IMR-90 (cell line): ENCODE measurements at regions of chr21 and their contacts with region 1.

Region 1: GRCh38 chr21:37164742-37165141 is 91.7 kb downstream of the TTC3 start:
- DNase-seq: no peak
- ATAC-seq: no peak
- H3K4me3 ChIP-seq: no peak overlapping the region
- H3K27ac ChIP-seq: peak overlapping the region; percentile 18; the same call in 1 of the 2 replicates
- H3K4me1 ChIP-seq: no peaks in the 10 kb centered on the region; the same call in 1 of the 2 replicates
- H3K27me3 ChIP-seq: no peaks in the 10 kb centered on the region
- CTCF ChIP-seq: no peak
- POLR2A ChIP-seq: no peak
- RAD21 ChIP-seq: no peak

Region 2: DNA sequence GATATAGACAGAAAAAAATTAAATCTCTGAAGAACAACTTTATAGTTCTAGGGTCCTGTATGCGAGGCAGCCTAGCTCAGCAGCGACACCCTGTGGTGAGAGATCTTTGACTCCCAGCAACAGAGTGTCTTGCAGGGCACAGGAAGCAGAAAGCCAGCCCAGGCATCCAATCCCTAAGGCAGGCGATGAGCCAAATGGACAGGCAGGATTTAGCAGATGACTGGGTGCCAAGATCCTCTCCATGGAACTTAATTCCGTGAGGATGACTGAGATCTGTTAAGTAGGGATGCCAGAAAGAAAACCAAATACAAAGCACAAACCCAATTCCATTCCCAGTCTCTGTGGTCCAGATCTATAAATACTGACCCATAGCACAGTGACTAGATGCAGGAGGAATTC is 237.0 kb before region 1 on chr21:
- CTCF ChIA-PET with region 1: no interaction called
- POLR2A ChIA-PET with region 1: no interaction called
- dilution Hi-C with region 1: no loop called
- in situ Hi-C with region 1: no loop called
- intact Hi-C with region 1: no loop called
- DNase-seq: peak; percentile 97
- ATAC-seq: peak; percentile 96
- H3K4me3 ChIP-seq: no peak overlapping the region
- H3K27ac ChIP-seq: no peak overlapping the region; the same call in 1 of the 2 replicates
- H3K4me1 ChIP-seq: peaks cover 10% of the 10 kb centered on the region
- H3K27me3 ChIP-seq: no peaks in the 10 kb centered on the region
- CTCF ChIP-seq: peak; percentile 97
- POLR2A ChIP-seq: no peak
- RAD21 ChIP-seq: peak; percentile 95

Region 3: GRCh38 chr21:37088186-37088735 is 76.5 kb before region 1 on chr21:
- CTCF ChIA-PET with region 1: no interaction called
- POLR2A ChIA-PET with region 1: no interaction called
- dilution Hi-C with region 1: no loop called
- in situ Hi-C with region 1: no loop called
- intact Hi-C with region 1: no loop called
- DNase-seq: peak; percentile 35
- ATAC-seq: peak; percentile 67
- H3K4me3 ChIP-seq: no peak overlapping the region
- H3K27ac ChIP-seq: no peak overlapping the region
- H3K4me1 ChIP-seq: peaks cover 2% of the 10 kb centered on the region; the same call in 1 of the 2 replicates
- H3K27me3 ChIP-seq: no peaks in the 10 kb centered on the region
- CTCF ChIP-seq: no peak
- POLR2A ChIP-seq: no peak
- RAD21 ChIP-seq: no peak

Region 4: GRCh38 chr21:37139902-37140301 is 24.8 kb before region 1 on chr21:
- CTCF ChIA-PET with region 1: no interaction called
- POLR2A ChIA-PET with region 1: no interaction called
- dilution Hi-C with region 1: no loop called
- in situ Hi-C with region 1: no loop called
- intact Hi-C with region 1: loop called (anchors 1 kb)
- DNase-seq: peak; percentile 71
- ATAC-seq: peak; percentile 87
- H3K4me3 ChIP-seq: no peak overlapping the region
- H3K27ac ChIP-seq: peak overlapping the region; percentile 59; the same call in 1 of the 2 replicates
- H3K4me1 ChIP-seq: peaks cover 2% of the 10 kb centered on the region; the same call in 1 of the 2 replicates
- H3K27me3 ChIP-seq: no peaks in the 10 kb centered on the region
- CTCF ChIP-seq: no peak
- POLR2A ChIP-seq: no peak
- RAD21 ChIP-seq: no peak

Region 5: DNA sequence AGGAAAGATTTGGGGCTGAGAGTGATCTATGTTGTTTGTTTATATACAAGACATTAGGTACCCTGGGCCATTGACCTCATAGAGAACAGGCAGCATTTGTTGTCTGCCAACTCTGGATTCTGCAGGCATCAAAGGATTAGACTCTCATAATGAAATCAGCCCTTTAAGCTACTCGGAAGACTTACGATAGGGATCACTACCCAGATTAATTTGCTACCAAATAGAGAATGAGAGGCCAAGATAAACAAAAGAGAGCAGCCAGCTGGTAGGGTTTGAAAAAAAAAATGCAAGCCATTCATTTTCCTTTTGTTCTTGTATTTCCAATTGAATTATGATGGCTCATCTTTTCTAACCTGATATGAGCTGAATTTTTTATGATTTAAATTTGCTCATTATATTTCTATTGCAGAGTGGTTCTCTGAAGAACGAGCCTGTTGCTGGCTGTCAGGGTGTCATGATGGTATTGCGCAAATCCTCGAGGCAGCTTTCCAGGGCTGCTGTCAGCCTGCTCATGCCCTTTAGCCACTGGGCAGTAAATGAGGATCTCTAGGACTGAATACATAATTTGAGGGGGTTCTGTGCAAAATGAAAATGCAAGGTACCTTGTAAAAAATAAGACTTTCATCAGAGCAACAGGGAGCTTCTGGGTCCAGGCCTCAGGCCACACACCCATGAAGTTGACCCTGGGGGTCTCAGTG is 975.6 kb after region 1 on chr21:
- CTCF ChIA-PET with region 1: no interaction called
- POLR2A ChIA-PET with region 1: no interaction called
- dilution Hi-C with region 1: no loop called
- in situ Hi-C with region 1: no loop called
- intact Hi-C with region 1: no loop called
- DNase-seq: peak; percentile 25
- ATAC-seq: peak; percentile 70
- H3K4me3 ChIP-seq: no peak overlapping the region
- H3K27ac ChIP-seq: peak overlapping the region; percentile 63
- H3K4me1 ChIP-seq: peaks cover 6% of the 10 kb centered on the region
- H3K27me3 ChIP-seq: peaks cover 6% of the 10 kb centered on the region
- CTCF ChIP-seq: no peak
- POLR2A ChIP-seq: no peak
- RAD21 ChIP-seq: no peak